ENCODE measurements at regions of chr1 and their contacts with region 1.

Region 1: GRCh38 chr1:151611832-151612500 is at the start of gene SNX27:
- DNase-seq: peak; percentile 87 to 96 (median 94)
- H3K4me3 ChIP-seq: peak within 1 kb of the TSS; percentile 62 to 99 (median 93)
- H3K27ac ChIP-seq: peak within 1 kb of the TSS; percentile 68 to 98 (median 94)
- H3K27me3 ChIP-seq: no peaks in the 10 kb centered on the region
- CTCF ChIP-seq: peak in 22 of 56 donors; percentile 8 to 54 (median 19)
- total RNA-seq, gene SNX27: 71.9 to 121 (median 93.6) TPM

Region 2: GRCh38 chr1:151175910-151176309 is 436.1 kb before region 1 on chr1 and contains the start of gene TMOD4:
- intact Hi-C with region 1: loop called in 1 of 2 experiments (anchors 10 kb)
- DNase-seq: no peak
- H3K4me3 ChIP-seq: peak within 1 kb of the TSS in 31 of 59 donors; percentile 0 to 46 (median 27)
- H3K27ac ChIP-seq: peak within 1 kb of the TSS in 58 of 59 donors; percentile 52 to 93 (median 81)
- H3K27me3 ChIP-seq: no peaks in the 10 kb centered on the region
- CTCF ChIP-seq: peak in 50 of 56 donors; percentile 4 to 69 (median 40)
- total RNA-seq, gene TMOD4: 0.60 to 2.8 (median 1.3) TPM in 34 of 120 experiments, not detected in the others

Region 3: DNA sequence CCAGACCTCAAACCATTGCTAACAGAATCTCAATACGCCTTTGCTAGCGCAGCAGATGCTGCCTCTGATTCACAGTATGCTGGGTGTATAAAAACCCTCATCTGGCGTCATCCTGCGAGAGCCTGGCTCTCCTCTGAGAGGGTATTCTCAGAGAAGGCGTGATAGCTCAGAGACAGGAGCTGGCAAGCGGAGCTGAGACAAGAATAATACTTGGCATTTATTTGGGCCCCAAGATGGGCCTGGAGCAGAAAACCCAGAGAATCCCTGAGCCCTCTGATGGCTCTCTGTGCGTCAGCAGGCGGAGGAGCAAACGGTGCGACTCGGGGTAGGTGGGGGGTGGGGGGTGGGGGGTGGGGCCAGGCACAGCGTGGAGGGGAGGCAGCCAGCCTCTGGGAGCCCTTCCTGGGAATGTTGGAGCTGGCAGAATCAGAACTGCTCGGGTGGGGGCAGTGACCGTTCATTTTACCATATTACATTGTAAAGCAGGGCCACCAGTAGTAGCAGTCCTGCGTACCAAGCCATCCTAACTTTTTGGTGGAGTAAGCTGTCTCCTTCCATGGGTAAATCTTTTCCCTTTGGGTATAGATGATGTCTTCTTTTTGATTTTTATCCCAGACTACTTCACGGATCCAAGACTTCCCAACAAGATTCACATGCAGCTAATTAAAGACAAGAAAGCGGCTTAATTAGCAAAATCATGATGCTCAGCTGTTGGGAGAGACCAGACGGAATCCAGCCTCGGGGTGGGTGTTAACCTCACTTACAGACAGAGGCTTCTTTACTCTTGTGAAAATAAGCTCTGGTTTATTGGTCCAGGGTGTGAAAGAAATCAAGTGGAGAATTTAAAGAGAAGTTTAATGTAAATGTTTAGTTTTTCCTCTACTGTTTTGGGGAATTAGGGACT is 116.4 kb after region 1 on chr1:
- intact Hi-C with region 1: loop called in 1 of 2 experiments (anchors 5 kb)
- DNase-seq: peak in 9 of 10 donors; percentile 52 to 86 (median 76)
- H3K4me3 ChIP-seq: peak overlapping the region in 53 of 59 donors; percentile 2 to 60 (median 38)
- H3K27ac ChIP-seq: peak overlapping the region in 56 of 59 donors; percentile 12 to 90 (median 70)
- H3K27me3 ChIP-seq: peaks cover 0 to 9% (median 0%) of the 10 kb centered on the region in 45 donors
- CTCF ChIP-seq: peak in 2 of 56 donors; percentile 9 to 11

Region 4: GRCh38 chr1:151871252-151872030 is 259.5 kb after region 1 on chr1:
- intact Hi-C with region 1: loop called in 1 of 2 experiments (anchors 10 kb)
- DNase-seq: no peak
- H3K4me3 ChIP-seq: no peak overlapping the region
- H3K27ac ChIP-seq: peak overlapping the region in 15 of 59 donors; percentile 1 to 56 (median 25)
- H3K27me3 ChIP-seq: no peaks in the 10 kb centered on the region
- CTCF ChIP-seq: no peak

Measured in dorsolateral prefrontal cortex (tissue), 120 donors.